ENCODE measurements at regions of chr6 and their contacts with region 1.

Region 1: DNA sequence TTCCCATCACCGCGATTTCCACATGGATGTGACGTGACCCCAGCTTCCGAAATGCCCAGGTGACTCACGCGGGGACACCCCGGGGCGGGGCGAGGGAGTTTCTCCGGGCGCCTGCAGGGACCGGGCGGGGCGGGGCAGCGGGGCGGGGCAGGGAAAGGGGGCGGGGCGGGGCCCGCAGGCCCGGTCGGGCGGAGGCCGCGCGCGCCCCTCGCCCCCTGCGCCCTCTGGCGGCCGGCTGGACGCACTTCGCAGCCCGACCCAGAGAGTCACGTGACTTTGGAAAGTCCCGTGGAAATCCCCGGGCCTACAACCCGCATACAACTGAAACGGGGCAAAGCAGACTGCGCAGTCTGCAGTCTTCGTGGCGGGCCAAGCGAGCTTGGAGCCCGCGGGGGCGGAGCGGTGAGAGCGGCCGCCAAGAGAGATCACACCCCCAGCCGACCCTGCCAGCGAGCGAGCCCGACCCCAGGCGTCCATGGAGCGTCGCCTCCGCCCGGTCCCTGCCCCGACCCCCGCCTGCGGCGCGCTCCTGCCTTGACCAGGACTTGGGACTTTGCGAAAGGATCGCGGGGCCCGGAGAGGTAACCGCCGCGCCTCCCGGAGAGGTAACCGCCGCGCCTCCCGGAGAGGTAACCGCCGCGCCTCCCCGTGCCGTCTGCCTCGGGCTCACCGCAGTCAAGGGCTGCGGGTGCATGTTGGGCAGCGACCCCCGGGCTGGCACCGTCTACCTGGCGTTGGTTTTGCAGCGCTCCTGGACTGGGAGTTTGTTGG is at the start of gene TNFAIP3:
- DNase-seq: peak; percentile 94
- CTCF ChIP-seq: peak; percentile 89

Region 2: GRCh38 chr6:137707590-137708360 is 159.3 kb before region 1 on chr6:
- in situ Hi-C with region 1: loop called (anchors 5 kb)
- DNase-seq: peak; percentile 58
- CTCF ChIP-seq: peak; percentile 58

Region 3: DNA sequence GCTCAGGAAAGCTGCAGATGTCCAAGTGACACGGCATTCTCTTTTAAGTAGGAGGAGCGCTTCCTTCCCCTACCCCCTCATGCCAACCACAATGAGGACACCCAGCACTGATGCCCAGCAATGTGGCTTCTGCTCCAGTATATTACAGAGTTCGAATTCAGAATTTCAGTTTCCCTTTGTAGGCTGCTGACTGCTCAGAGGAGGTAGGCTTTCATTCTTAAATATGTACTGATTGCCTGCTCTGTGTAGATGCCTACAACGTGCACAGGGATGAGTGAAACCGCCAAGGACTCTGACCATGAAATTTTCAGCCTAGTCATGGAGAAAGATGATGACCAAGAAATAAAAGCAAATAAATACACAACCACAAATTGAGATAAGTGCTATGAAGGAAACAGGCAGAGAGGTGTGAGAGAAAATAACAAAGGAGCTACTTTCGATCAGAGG is 50.9 kb before region 1 on chr6:
- in situ Hi-C with region 1: no loop called
- DNase-seq: peak; percentile 22
- CTCF ChIP-seq: no peak

Region 4: GRCh38 chr6:138063726-138064125 is 196.6 kb after region 1 on chr6:
- in situ Hi-C with region 1: no loop called
- DNase-seq: no peak
- CTCF ChIP-seq: no peak

Region 5: GRCh38 chr6:138970856-138971425 is 1103.8 kb after region 1 on chr6:
- in situ Hi-C with region 1: no loop called
- DNase-seq: no peak
- CTCF ChIP-seq: no peak